ENCODE measurements at regions of chr17 and their contacts with region 1.

Region 1: GRCh38 chr17:42019509-42020404 is at the start of gene NKIRAS2:
- DNase-seq: peak; percentile 96
- H3K4me3 ChIP-seq: peak within 1 kb of the TSS; percentile 91 to 92
- H3K27ac ChIP-seq: peak within 1 kb of the TSS; percentile 73 to 81; a peak in 3 of 4 replicates
- H3K4me1 ChIP-seq: peaks cover 9 to 25% of the 10 kb centered on the region in 2 experiments; a peak in 3 of 4 replicates
- H3K27me3 ChIP-seq: no peaks in the 10 kb centered on the region
- CTCF ChIP-seq: peak; percentile 82
- EP300 ChIP-seq: peak in 1 of 2 experiments; percentile 19; a peak in 1 of 4 replicates
- RAD21 ChIP-seq: no peak
- polyA plus RNA-seq, gene NKIRAS2: 89.8 and 91.8 TPM in 2 replicates

Region 2: DNA sequence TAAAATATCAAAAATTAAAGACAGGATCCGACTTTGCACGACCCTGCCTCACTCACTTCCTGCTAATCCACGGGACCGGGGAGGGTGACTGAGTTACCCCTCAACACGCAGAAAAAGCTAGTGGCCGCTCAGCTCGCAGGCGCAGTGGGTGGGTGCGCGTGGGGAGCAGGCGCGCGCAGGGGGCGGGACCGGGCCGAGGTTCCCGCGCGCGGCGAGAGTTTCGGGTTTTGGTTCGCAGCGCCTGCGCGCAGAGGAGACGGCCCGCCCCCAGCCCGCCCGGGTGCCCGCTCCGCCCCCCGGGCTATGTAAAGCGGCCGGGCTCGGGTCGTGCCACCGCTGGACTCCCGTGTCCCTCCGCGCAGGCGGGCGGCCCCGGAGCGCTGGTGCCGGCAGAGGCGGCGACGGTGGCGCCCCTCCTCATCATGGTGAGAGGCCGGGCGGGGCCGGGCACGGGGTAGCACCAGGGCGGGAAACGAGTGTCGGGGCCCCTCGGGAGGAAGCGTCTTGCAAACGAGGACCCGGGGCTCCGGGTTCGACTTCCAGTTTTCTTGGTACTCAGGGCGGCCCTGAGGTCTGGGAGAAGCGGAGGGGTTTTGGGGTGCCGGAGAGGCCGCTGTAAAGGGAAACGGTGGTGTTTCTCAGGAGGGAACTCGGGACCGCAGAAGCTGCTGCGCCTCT is 53.2 kb before region 1 on chr17 and contains the start of gene CNP:
- CTCF ChIA-PET with region 1: interaction called, 67 read pairs
- POLR2A ChIA-PET with region 1: interaction called, 10 read pairs
- DNase-seq: peak; percentile 99
- H3K4me3 ChIP-seq: peak within 1 kb of the TSS; percentile 93 to 96
- H3K27ac ChIP-seq: peak within 1 kb of the TSS; percentile 65 to 91
- H3K4me1 ChIP-seq: peaks cover 5 to 34% of the 10 kb centered on the region in 2 experiments; a peak in 2 of 4 replicates
- H3K27me3 ChIP-seq: no peaks in the 10 kb centered on the region
- CTCF ChIP-seq: no peak
- EP300 ChIP-seq: no peak
- RAD21 ChIP-seq: no peak
- polyA plus RNA-seq, gene CNP: 44.8 and 54.8 TPM in 2 replicates

Region 3: DNA sequence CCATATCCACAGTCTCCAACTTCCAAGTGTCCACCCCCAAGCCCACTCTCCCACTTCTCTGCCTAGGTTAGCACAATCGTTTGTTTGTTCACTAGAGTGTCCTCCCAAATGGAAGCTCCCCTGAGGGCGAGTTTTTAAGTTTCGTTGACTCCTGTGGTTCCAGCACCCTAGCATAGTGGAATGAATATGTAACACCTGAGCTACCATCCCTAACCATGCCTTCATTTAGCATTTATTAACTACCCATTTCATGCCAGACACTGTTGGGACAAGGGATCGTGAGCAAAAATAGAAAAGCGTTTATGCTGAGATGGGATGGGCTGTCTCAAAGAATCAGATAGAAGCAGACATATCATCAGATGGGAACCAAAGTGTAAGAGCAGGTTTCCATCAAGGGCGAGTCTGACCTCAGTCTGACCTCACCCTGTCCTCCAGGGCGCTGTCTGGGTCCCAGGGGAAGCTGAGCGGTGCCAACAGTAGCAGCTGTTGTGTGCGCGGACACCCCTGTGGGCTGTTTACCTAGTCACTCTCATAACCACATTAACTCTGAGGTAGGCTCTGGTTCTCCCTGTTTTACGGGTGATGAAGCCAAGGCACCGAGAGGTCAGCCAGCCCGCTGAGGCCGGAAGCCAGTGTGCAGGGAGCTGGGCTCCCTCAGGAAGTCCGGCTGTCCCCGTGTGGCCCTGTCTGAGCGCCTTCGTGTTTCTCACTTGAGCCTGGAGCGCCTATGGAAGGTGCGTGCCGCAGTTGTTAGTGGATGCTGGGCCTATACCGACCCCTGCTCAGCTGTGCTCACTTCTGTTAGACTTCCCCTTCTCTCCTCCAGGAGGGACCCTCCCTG is 47.0 kb before region 1 on chr17:
- CTCF ChIA-PET with region 1: interaction called, 21 read pairs
- POLR2A ChIA-PET with region 1: interaction called, 19 read pairs
- DNase-seq: peak; percentile 72
- H3K4me3 ChIP-seq: no peak overlapping the region; a peak in 1 of 4 replicates
- H3K27ac ChIP-seq: peak overlapping the region in 1 of 2 experiments; percentile 92; a peak in 2 of 4 replicates
- H3K4me1 ChIP-seq: peaks cover 0 to 66% of the 10 kb centered on the region in 2 experiments; a peak in 2 of 4 replicates
- H3K27me3 ChIP-seq: no peaks in the 10 kb centered on the region
- CTCF ChIP-seq: no peak
- EP300 ChIP-seq: peak in 1 of 2 experiments; percentile 52; a peak in 2 of 4 replicates
- RAD21 ChIP-seq: no peak

Region 4: DNA sequence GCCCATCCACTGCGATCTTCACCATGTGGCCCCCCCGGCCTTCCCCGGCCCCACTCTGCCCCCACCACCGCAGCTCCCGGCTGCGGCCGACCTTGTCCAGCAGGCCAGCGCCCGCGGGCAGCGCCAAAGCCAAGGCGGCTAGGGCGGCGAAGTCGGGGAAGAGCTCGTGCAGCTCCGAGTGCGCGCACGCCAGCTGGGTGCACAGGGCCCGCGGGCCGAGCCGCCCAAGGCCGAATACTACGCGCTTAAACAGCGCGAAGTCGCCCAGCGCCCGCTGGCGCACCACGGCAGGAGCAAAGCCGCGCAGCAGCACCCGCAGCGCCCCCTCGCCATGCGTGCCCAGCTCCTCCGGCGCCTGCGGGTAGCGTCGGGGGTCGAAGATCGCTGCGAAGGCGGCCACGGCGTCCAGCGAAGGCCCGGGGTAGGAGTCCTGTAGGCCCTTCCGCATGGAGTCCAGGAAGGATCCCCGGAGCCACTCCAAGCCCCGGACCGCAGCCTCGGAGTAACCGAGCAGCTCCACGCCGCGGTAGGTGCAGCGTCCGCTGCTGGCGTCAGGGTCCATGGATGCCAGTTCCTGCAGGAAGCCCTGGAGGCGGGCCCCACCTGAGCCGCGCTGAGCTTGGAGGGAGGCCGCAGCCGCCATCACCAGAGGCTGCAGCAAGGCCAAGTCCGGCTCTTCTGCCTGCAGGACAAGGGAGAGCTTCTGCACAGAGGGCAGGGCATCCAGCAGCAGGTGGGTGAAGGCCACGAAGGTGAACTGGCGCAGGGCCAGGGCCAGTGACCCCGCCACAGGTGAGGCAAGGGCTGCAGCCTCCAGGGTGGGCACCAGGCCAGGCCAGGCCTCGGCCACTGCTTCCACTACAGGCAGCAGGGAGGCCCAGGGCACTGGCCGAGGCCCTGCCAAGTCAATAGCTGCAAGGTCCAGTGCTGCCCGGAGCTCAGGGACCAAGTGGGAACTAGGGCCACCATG is 20.3 kb after region 1 on chr17:
- CTCF ChIA-PET with region 1: interaction called, 34 read pairs
- POLR2A ChIA-PET with region 1: interaction called, 4 read pairs
- DNase-seq: no peak
- H3K4me3 ChIP-seq: no peak overlapping the region
- H3K27ac ChIP-seq: no peak overlapping the region
- H3K4me1 ChIP-seq: no peaks in the 10 kb centered on the region
- H3K27me3 ChIP-seq: no peaks in the 10 kb centered on the region
- CTCF ChIP-seq: no peak
- EP300 ChIP-seq: no peak
- RAD21 ChIP-seq: no peak

Region 5: GRCh38 chr17:42050393-42051012 is 30.7 kb after region 1 on chr17 and contains the start of gene C17orf113:
- CTCF ChIA-PET with region 1: interaction called, 15 read pairs
- POLR2A ChIA-PET with region 1: no interaction called
- DNase-seq: peak; percentile 94
- H3K4me3 ChIP-seq: peak within 1 kb of the TSS; percentile 57 to 60
- H3K27ac ChIP-seq: no peak within 1 kb of the TSS
- H3K4me1 ChIP-seq: peaks cover 0 to 8% of the 10 kb centered on the region in 2 experiments; a peak in 1 of 4 replicates
- H3K27me3 ChIP-seq: peaks cover 15% of the 10 kb centered on the region
- CTCF ChIP-seq: peak; percentile 27; the same call in 1 of the 2 replicates
- EP300 ChIP-seq: no peak
- RAD21 ChIP-seq: peak; percentile 33; the same call in 1 of the 2 replicates
- polyA plus RNA-seq, gene C17orf113: 0.44 and 0.52 TPM in 2 replicates

Region 6: DNA sequence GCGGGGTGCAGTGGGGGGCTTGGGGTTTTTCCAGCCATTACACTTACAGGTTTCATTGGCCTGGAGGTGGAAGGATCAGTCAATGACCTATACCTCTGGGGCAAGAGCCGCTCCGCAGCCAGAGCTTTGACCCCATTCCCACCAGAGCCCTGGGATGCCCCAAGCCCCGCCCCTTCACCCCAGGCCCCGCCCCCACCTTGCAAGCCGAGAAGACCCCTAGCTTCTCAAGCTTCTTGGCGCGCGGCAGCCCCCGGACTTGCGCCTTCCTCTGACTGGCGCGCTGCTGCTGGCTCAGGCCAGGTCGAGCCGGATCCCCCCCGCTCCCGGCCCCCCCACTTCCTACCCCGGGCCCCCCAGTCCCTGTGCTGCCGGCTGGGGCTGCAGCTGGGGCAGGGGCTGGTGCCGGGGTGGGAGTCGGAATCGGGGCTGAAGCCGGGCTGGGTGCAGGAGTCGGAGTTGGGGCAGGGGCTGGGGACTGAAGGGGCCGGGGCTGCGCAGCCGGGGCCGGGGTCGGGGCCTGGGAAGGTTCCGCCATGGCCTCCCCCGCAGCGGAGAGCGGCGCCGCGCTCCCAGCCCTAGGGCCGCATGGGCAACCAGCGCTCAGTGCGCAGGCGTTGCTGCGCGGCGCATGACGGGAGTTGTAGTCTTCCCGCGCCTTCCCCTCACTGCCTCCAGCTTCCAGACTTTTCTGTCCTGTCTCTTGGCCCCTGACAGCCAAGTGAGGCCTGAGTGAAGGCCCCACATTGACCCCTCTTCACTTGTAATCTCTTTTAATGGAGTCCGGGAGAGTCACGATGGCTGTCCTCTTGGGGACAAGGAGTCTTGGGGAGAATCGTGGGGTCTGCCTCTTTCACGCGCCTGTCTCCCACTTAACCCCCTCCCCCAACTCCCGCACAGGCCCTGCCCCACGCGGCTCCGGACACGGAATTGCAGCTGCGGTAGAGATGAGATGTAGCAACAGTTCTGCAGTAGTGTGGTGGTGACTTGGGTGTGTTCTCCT is 101.3 kb after region 1 on chr17 and contains the start of gene KAT2A:
- CTCF ChIA-PET with region 1: interaction called, 496 read pairs
- POLR2A ChIA-PET with region 1: interaction called, 9 read pairs
- DNase-seq: peak; percentile 97
- H3K4me3 ChIP-seq: peak within 1 kb of the TSS; percentile 49 to 71
- H3K27ac ChIP-seq: peak within 1 kb of the TSS in 1 of 2 experiments; percentile 64; a peak in 2 of 4 replicates
- H3K4me1 ChIP-seq: peaks cover 0 to 11% of the 10 kb centered on the region in 2 experiments; a peak in 1 of 4 replicates
- H3K27me3 ChIP-seq: no peaks in the 10 kb centered on the region
- CTCF ChIP-seq: no peak
- EP300 ChIP-seq: no peak
- RAD21 ChIP-seq: no peak
- polyA plus RNA-seq, gene KAT2A: 45.1 and 58.6 TPM in 2 replicates